CD4-positive, alpha-beta memory T cell (primary cell): ENCODE measurements at regions of chr7 and their contacts with region 1.

Region 1: DNA sequence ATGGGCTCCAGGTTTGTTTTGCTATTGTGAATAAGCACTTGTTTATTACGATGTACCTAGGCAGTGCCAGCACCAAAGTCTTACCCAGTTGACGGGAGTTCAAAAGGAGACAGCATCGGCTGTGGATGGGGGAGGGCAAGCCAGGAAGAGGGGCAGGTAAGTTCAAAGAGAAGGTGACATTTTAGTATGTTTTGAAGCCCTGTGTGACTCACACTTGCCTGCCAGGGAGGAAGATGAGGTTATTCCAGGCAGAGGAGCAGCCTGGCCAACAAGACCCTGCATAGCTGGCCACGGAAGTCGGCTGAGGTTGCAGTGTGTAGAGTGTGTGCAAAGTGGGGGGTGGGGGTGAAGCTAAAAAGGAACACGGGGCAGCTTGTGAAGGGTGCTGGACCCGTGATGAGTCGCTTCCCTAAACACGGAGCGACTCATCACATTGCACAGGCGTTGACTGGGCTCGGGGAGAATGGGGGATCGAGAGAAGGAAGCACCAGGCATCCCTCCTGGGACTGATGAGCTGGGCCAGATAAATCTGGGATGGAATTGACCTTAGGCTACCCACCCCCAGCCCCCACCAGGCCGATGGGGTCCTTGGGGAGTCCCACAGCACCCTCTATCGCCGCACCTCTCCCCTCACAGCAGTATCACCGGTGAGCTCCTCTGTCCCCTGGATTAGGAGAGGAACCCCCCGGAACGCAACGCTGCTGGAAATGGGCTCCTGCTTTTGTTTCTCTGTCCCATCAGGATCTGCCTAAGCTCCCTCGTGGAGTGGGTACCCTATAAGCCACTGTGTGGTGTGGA is 97.9 kb upstream of the IKZF1 start:
- DNase-seq: peak; percentile 63 to 91 (median 65)
- H3K4me3 ChIP-seq: peak overlapping the region; percentile 4 to 14
- H3K4me3 Mint-ChIP-seq: peak overlapping the region; percentile 73 to 88 (median 81)
- H3K27ac ChIP-seq: peak overlapping the region; percentile 18
- H3K27ac Mint-ChIP-seq: peak overlapping the region; percentile 90 to 97 (median 93)
- H3K4me1 ChIP-seq: peaks cover 79% of the 10 kb centered on the region
- H3K4me1 Mint-ChIP-seq: peaks cover 63 to 88% (median 72%) of the 10 kb centered on the region in 4 donors
- H3K27me3 ChIP-seq: no peaks in the 10 kb centered on the region
- H3K27me3 Mint-ChIP-seq: no peaks in the 10 kb centered on the region

Region 2: DNA sequence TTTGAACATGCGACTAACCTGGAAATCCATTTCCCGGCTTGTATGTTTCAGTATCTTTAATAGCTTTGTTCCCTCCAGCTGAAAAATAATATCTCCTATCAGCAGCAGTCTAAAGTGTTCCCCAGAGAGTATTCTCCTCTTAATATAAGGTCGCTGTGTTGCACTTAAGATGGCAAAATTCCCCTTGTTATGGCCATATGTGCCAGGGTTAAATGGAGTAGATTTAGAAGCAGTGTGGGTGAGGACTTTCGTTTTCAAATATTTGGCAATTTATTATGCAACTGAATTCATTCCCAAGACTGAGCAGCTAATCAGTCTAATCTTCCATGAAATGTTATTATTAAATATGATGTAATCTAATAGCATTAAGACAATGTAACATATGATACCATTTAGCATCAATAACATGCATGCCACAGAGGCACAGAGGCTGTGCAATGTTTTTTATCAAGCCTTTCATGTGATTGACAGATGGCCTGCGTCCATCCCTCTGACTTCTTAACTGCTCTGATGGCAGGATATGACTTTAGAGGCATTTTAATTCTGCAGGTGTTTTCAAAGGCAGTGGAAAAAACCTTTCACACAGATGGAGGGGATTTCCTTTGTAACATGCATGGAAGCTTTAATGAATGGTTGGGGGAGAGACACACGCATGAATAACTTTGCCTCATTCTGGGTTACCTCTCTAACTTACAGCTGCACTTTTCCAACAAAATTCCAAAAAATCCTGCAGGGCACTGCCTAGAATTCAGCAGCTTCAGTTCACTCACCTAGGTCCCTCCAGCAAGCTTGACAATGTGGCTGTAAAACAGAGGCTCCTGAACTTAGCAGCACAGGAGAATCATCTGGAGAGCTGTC is 58.5 kb before region 1 on chr7:
- CTCF ChIA-PET with region 1: interaction called, 54 read pairs
- POLR2A ChIA-PET with region 1: interaction called, 8 read pairs
- intact Hi-C with region 1: no loop called
- DNase-seq: peak; percentile 54 to 81 (median 64)
- H3K4me3 ChIP-seq: no peak overlapping the region
- H3K4me3 Mint-ChIP-seq: peak overlapping the region in 7 of 8 donors; percentile 17 to 66 (median 51)
- H3K27ac ChIP-seq: peak overlapping the region; percentile 55
- H3K27ac Mint-ChIP-seq: peak overlapping the region; percentile 77 to 96 (median 93)
- H3K4me1 ChIP-seq: peaks cover 44% of the 10 kb centered on the region
- H3K4me1 Mint-ChIP-seq: peaks cover 34 to 62% (median 47%) of the 10 kb centered on the region in 4 donors
- H3K27me3 ChIP-seq: no peaks in the 10 kb centered on the region
- H3K27me3 Mint-ChIP-seq: no peaks in the 10 kb centered on the region

Region 3: DNA sequence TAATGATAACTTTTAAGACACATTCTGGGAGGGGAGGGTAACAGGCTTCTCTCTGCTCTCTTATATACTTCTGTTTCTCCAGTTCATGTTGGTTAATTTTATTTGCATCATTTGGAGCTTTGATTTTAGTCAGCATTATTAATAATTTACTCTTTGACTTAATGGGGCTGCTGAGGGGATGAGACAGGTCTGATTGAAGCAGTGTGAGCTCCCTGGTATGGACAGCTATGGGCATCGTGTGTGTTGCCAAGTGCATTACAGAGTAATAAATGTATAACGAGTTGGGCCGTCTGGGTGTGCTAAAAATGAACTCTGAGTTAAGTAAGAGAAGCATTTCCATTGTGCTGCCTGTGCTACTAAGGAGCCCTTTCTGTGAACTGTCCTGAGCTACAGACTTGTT is 66.2 kb after region 1 on chr7:
- CTCF ChIA-PET with region 1: interaction called, 134 read pairs
- POLR2A ChIA-PET with region 1: interaction called, 106 read pairs
- intact Hi-C with region 1: no loop called
- DNase-seq: no peak
- H3K4me3 ChIP-seq: no peak overlapping the region
- H3K4me3 Mint-ChIP-seq: no peak overlapping the region
- H3K27ac ChIP-seq: no peak overlapping the region
- H3K27ac Mint-ChIP-seq: peak overlapping the region in 5 of 7 donors; percentile 6 to 97 (median 7)
- H3K4me1 ChIP-seq: peaks cover 74% of the 10 kb centered on the region
- H3K4me1 Mint-ChIP-seq: peaks cover 49 to 78% (median 65%) of the 10 kb centered on the region in 4 donors
- H3K27me3 ChIP-seq: no peaks in the 10 kb centered on the region
- H3K27me3 Mint-ChIP-seq: no peaks in the 10 kb centered on the region

Region 4: DNA sequence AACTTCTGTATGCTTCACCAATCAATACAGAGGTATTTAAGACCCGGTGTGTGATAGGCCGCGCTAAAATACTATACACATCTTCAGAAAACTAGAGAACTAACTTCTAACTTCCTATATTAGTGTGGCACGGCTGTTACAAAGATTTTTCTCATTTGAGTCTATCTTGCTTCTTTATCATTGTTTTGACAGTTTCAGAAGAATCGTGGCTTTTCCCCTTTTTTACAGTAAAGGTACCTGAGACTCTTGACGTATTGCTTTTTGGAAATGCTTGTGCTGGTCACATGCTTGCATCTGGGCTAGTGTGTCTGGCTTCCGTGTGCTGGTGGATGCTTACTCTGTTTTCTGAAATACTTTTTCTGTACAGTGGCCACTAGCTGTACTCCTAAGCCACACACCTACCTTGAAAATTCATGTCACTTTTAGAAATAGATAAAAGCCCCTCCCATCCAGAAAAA is 110.6 kb after region 1 on chr7:
- CTCF ChIA-PET with region 1: interaction called, 173 read pairs
- POLR2A ChIA-PET with region 1: interaction called, 675 read pairs
- intact Hi-C with region 1: loop called (anchors 1 kb)
- DNase-seq: peak; percentile 78 to 89 (median 84)
- H3K4me3 ChIP-seq: peak overlapping the region in 1 of 2 donors; percentile 53
- H3K4me3 Mint-ChIP-seq: peak overlapping the region; percentile 78 to 100 (median 92)
- H3K27ac ChIP-seq: peak overlapping the region; percentile 90
- H3K27ac Mint-ChIP-seq: peak overlapping the region in 6 of 7 donors; percentile 93 to 99 (median 98)
- H3K4me1 ChIP-seq: peaks cover 99% of the 10 kb centered on the region
- H3K4me1 Mint-ChIP-seq: peaks cover 73 to 100% (median 86%) of the 10 kb centered on the region in 4 donors
- H3K27me3 ChIP-seq: no peaks in the 10 kb centered on the region
- H3K27me3 Mint-ChIP-seq: no peaks in the 10 kb centered on the region

Region 5: DNA sequence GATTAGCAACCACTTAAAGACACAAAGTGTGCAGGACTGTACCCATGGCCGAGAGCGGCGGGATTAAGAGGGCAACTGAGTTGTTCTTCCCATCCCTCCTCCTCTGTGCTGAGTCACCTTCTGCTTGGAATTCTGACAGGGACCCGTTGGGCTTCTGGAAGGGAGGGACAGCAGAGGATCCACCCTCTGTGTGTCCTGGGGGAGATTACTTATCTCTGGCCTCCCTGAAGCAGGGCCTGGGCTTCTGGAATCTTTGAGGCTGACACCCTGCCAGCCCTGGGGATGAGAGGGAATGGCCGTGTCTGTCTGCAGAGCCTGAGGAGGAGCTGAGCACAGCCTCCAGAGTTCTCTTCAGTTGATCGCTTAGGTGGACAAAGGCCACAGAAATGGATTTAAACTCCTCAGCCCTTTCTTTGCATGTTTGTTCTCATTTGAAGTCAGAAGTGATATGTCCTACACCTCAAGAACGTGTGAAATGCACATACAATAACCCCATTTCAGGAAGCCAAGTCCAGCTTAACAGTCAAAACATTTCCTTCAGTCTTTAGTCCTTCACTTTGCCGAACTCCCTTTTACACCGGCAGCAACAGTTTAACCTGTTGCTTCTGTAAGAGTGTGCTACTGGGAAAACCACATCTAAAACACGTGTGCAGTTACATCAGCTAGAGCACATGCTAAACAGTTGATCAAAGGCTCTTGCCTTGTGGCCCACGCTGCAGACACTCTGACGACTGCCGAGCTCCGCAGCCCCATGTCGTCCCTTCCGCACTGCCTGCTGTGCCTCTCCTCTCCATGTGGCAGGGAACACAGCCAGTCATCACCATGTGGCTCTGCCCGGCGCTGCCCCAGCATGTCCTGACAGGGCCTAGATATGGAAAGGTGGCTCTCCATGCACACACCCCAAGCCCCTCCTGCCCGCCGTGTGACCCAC is 153.6 kb after region 1 on chr7:
- CTCF ChIA-PET with region 1: interaction called, 424 read pairs
- POLR2A ChIA-PET with region 1: interaction called, 78 read pairs
- intact Hi-C with region 1: no loop called
- DNase-seq: peak; percentile 84 to 94 (median 88)
- H3K4me3 ChIP-seq: peak overlapping the region; percentile 1 to 25
- H3K4me3 Mint-ChIP-seq: peak overlapping the region; percentile 70 to 87 (median 78)
- H3K27ac ChIP-seq: peak overlapping the region; percentile 89
- H3K27ac Mint-ChIP-seq: peak overlapping the region in 6 of 7 donors; percentile 98 to 100 (median 99)
- H3K4me1 ChIP-seq: peaks cover 99% of the 10 kb centered on the region
- H3K4me1 Mint-ChIP-seq: peaks cover 87 to 99% (median 95%) of the 10 kb centered on the region in 4 donors
- H3K27me3 ChIP-seq: no peaks in the 10 kb centered on the region
- H3K27me3 Mint-ChIP-seq: no peaks in the 10 kb centered on the region

Region 6: GRCh38 chr7:50418086-50418515 is 211.4 kb after region 1 on chr7:
- CTCF ChIA-PET with region 1: interaction called, 205 read pairs
- POLR2A ChIA-PET with region 1: interaction called, 38 read pairs
- intact Hi-C with region 1: loop called (anchors 1 kb)
- DNase-seq: peak; percentile 59 to 71 (median 63)
- H3K4me3 ChIP-seq: no peak overlapping the region
- H3K4me3 Mint-ChIP-seq: no peak overlapping the region
- H3K27ac ChIP-seq: no peak overlapping the region
- H3K27ac Mint-ChIP-seq: peak overlapping the region in 1 of 7 donors; percentile 62
- H3K4me1 ChIP-seq: peaks cover 16% of the 10 kb centered on the region
- H3K4me1 Mint-ChIP-seq: peaks cover 12 to 23% (median 16%) of the 10 kb centered on the region in 4 donors
- H3K27me3 ChIP-seq: no peaks in the 10 kb centered on the region
- H3K27me3 Mint-ChIP-seq: no peaks in the 10 kb centered on the region

Region 7: DNA sequence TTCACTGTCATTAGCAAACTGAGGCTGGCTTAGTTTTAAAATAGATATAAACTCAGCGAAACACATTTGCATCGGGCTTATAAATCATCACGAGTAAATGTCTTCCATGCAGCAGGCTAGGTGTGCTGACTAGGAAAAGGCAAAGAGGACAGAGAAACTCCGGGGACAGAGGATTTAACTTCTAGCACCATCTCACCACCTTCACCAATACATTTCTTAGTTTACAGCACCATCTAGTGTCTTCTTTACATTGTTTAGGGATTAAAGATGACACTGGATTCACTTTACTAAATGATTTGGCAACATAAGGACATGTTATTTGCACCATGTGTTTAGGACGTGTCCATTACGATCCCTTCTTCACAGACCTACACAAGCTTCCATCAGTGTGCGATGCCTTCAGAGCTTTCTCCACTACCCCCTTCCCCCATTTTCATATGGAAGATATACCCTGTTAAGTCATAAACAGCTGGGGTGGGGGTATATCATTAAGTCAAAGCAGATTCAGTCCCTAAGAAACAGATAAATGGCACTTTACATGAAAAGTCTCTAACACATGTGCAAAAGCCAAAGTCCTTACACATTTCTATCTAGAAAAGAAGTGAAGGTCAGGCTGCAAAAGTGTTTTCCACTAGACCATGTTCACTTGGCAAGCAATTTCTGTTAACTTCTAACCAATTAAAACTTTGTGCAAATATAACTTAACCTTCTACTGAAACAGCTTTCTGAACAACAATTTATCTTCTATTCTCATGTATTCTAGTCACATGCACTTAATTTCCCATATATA is 472.8 kb after region 1 on chr7:
- CTCF ChIA-PET with region 1: interaction called, 12 read pairs
- POLR2A ChIA-PET with region 1: no interaction called
- intact Hi-C with region 1: loop called (anchors 1 kb)
- DNase-seq: peak in 4 of 5 donors; percentile 51 to 64 (median 58)
- H3K4me3 ChIP-seq: no peak overlapping the region
- H3K4me3 Mint-ChIP-seq: no peak overlapping the region
- H3K27ac ChIP-seq: no peak overlapping the region
- H3K27ac Mint-ChIP-seq: no peak overlapping the region
- H3K4me1 ChIP-seq: no peaks in the 10 kb centered on the region
- H3K4me1 Mint-ChIP-seq: peaks cover 0 to 3% (median under 1%) of the 10 kb centered on the region in 4 donors
- H3K27me3 ChIP-seq: no peaks in the 10 kb centered on the region
- H3K27me3 Mint-ChIP-seq: peaks cover 0 to under 1% of the 10 kb centered on the region in 2 donors